ENCODE measurements at regions of chr16 and their contacts with region 1.

Region 1: GRCh38 chr16:67892899-67893742 is at the start of gene PSKH1:
- DNase-seq: peak; percentile 97
- H3K4me3 Mint-ChIP-seq: peak within 1 kb of the TSS; percentile 97
- H3K27ac Mint-ChIP-seq: peak within 1 kb of the TSS; percentile 94
- H3K4me1 Mint-ChIP-seq: peaks cover 22% of the 10 kb centered on the region
- H3K27me3 Mint-ChIP-seq: no peaks in the 10 kb centered on the region
- total RNA-seq, gene PSKH1: 14.4 and 16.3 TPM in 2 replicates

Region 2: GRCh38 chr16:67841764-67842508 is 51.2 kb before region 1 on chr16 and contains the start of gene THAP11:
- intact Hi-C with region 1: loop called (anchors 1 kb)
- DNase-seq: peak; percentile 99
- H3K4me3 Mint-ChIP-seq: peak within 1 kb of the TSS; percentile 93
- H3K27ac Mint-ChIP-seq: peak within 1 kb of the TSS; percentile 94
- H3K4me1 Mint-ChIP-seq: peaks cover 26% of the 10 kb centered on the region
- H3K27me3 Mint-ChIP-seq: no peaks in the 10 kb centered on the region
- total RNA-seq, gene THAP11: 46.4 and 48.7 TPM in 2 replicates

Region 3: GRCh38 chr16:67872786-67873537 is 20.2 kb before region 1 on chr16 and contains the start of gene EDC4:
- intact Hi-C with region 1: loop called (anchors 2 kb)
- DNase-seq: peak; percentile 98
- H3K4me3 Mint-ChIP-seq: peak within 1 kb of the TSS; percentile 86
- H3K27ac Mint-ChIP-seq: peak within 1 kb of the TSS; percentile 88
- H3K4me1 Mint-ChIP-seq: peaks cover 27% of the 10 kb centered on the region
- H3K27me3 Mint-ChIP-seq: no peaks in the 10 kb centered on the region
- total RNA-seq, gene EDC4: 112 and 122 TPM in 2 replicates

Region 4: DNA sequence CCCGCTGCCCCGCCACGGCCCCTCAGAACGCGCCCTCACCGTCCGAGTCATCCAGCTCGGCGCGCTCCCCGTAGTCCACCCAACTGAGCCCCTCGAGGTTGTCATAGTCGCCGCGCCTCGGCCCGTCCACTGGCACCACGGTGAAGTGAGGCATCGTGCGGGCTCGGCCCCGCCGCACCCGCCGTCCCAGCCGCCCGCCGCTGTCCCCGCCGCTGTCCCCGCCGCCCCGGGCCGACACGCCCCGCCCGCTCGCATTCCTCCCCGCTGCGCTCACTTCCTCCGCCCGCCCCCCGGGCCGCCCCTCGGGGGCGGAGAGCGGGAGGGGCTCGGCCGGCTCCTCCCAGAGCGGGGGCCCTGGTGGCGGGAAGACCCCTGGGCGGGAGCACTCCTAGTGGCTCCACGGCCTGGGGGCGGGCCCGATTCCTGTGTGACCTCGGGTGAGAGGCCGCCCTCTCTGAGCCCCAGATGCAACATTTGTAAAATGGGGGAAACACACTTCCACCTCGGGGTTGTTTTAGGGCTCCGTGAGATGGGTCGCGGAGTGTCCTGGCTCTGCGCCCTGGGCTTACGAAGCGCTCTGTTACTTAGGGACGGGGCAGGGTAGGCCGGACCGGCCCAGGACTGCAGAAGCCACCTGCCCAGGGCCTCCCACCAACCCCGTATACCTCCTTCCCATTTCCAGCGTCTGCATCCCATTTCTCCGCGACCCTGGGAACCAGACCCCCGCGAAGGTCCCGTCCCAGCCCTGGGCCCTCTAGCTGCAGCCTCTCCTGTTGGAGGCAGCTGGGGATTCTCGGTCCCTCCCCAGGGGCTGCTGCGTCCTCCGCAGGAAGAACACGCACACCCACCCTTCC is 75.5 kb after region 1 on chr16 and contains the start of gene SLC12A4:
- intact Hi-C with region 1: loop called (anchors 1 kb)
- DNase-seq: peak; percentile 98
- H3K4me3 Mint-ChIP-seq: peak within 1 kb of the TSS; percentile 97
- H3K27ac Mint-ChIP-seq: peak within 1 kb of the TSS; percentile 95
- H3K4me1 Mint-ChIP-seq: peaks cover 24% of the 10 kb centered on the region
- H3K27me3 Mint-ChIP-seq: peaks cover 2% of the 10 kb centered on the region
- total RNA-seq, gene SLC12A4: 40.6 and 44.7 TPM in 2 replicates

Region 5: GRCh38 chr16:68040507-68041288 is 147.6 kb after region 1 on chr16:
- intact Hi-C with region 1: loop called (anchors 5 kb)
- DNase-seq: peak; percentile 96
- H3K4me3 Mint-ChIP-seq: no peak overlapping the region
- H3K27ac Mint-ChIP-seq: peak overlapping the region; percentile 51
- H3K4me1 Mint-ChIP-seq: peaks cover 16% of the 10 kb centered on the region
- H3K27me3 Mint-ChIP-seq: no peaks in the 10 kb centered on the region